ENCODE measurements at regions of chr14 and their contacts with region 1.

Region 1: GRCh38 chr14:97185186-97185585 is 388.0 kb downstream of the VRK1 start:
- DNase-seq: peak; percentile 54
- H3K4me3 Mint-ChIP-seq: no peak overlapping the region
- H3K27ac Mint-ChIP-seq: no peak overlapping the region
- H3K4me1 Mint-ChIP-seq: peaks cover 13% of the 10 kb centered on the region
- H3K27me3 Mint-ChIP-seq: no peaks in the 10 kb centered on the region

Region 2: GRCh38 chr14:97155320-97155719 is 29.9 kb before region 1 on chr14:
- CTCF ChIA-PET with region 1: no interaction called
- intact Hi-C with region 1: no loop called
- DNase-seq: no peak
- H3K4me3 Mint-ChIP-seq: no peak overlapping the region
- H3K27ac Mint-ChIP-seq: no peak overlapping the region
- H3K4me1 Mint-ChIP-seq: no peaks in the 10 kb centered on the region
- H3K27me3 Mint-ChIP-seq: peaks cover 10% of the 10 kb centered on the region

Region 3: GRCh38 chr14:97380539-97380941 is 195.4 kb after region 1 on chr14:
- CTCF ChIA-PET with region 1: no interaction called
- intact Hi-C with region 1: loop called (anchors 10 kb)
- DNase-seq: peak; percentile 86
- H3K4me3 Mint-ChIP-seq: no peak overlapping the region
- H3K27ac Mint-ChIP-seq: peak overlapping the region; percentile 16
- H3K4me1 Mint-ChIP-seq: peaks cover 39% of the 10 kb centered on the region
- H3K27me3 Mint-ChIP-seq: no peaks in the 10 kb centered on the region

Region 4: GRCh38 chr14:97581016-97581415 is 395.8 kb after region 1 on chr14:
- CTCF ChIA-PET with region 1: no interaction called
- intact Hi-C with region 1: loop called (anchors 10 kb)
- DNase-seq: peak; percentile 30
- H3K4me3 Mint-ChIP-seq: no peak overlapping the region
- H3K27ac Mint-ChIP-seq: no peak overlapping the region
- H3K4me1 Mint-ChIP-seq: peaks cover 3% of the 10 kb centered on the region
- H3K27me3 Mint-ChIP-seq: no peaks in the 10 kb centered on the region

Region 5: GRCh38 chr14:97724265-97724731 is 539.1 kb after region 1 on chr14:
- CTCF ChIA-PET with region 1: no interaction called
- intact Hi-C with region 1: loop called (anchors 10 kb)
- DNase-seq: peak; percentile 64
- H3K4me3 Mint-ChIP-seq: peak overlapping the region; percentile 76
- H3K27ac Mint-ChIP-seq: peak overlapping the region; percentile 96
- H3K4me1 Mint-ChIP-seq: peaks cover 69% of the 10 kb centered on the region
- H3K27me3 Mint-ChIP-seq: no peaks in the 10 kb centered on the region